ENCODE measurements at regions of chr7 and their contacts with region 1.

Region 1: DNA sequence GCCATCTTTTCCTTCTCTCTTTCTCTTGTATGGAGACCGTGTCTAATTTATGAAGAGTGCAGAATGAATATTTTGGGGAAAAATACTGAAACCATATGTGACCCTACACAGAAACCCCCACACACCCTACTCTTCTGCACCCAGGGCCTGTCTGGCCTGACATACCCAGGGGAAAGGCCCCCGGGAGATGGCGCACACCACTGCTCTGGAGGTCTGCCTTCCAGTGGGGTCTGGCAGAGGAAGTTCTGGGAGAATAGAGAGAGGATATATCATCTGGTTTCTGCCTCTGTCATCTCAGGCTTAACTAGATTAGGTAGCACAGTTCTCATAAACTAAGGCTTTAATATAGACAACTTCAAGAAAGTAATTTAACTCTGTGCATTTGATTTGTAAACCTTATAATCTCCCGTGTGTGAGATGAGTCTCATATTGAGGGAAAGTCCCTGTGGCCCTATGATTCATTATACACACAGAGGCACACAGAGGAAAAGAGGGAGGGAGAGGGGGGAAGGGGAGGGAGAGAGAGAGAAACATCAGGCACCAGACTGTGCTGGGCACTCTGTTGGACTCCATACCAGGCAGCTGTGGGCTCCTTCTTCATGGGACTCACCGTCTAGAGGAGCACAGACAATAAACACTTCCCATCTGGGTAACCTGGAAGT is 123.3 kb downstream of the AOAH start:
- DNase-seq: peak; percentile 60
- H3K4me3 Mint-ChIP-seq: no peak overlapping the region
- H3K27ac Mint-ChIP-seq: no peak overlapping the region
- H3K4me1 Mint-ChIP-seq: peaks cover 73% of the 10 kb centered on the region
- H3K27me3 Mint-ChIP-seq: no peaks in the 10 kb centered on the region

Region 2: GRCh38 chr7:36415144-36415543 is 185.9 kb before region 1 on chr7:
- CTCF ChIA-PET with region 1: no interaction called
- intact Hi-C with region 1: no loop called
- DNase-seq: no peak
- H3K4me3 Mint-ChIP-seq: no peak overlapping the region
- H3K27ac Mint-ChIP-seq: no peak overlapping the region
- H3K4me1 Mint-ChIP-seq: no peaks in the 10 kb centered on the region
- H3K27me3 Mint-ChIP-seq: no peaks in the 10 kb centered on the region

Region 3: DNA sequence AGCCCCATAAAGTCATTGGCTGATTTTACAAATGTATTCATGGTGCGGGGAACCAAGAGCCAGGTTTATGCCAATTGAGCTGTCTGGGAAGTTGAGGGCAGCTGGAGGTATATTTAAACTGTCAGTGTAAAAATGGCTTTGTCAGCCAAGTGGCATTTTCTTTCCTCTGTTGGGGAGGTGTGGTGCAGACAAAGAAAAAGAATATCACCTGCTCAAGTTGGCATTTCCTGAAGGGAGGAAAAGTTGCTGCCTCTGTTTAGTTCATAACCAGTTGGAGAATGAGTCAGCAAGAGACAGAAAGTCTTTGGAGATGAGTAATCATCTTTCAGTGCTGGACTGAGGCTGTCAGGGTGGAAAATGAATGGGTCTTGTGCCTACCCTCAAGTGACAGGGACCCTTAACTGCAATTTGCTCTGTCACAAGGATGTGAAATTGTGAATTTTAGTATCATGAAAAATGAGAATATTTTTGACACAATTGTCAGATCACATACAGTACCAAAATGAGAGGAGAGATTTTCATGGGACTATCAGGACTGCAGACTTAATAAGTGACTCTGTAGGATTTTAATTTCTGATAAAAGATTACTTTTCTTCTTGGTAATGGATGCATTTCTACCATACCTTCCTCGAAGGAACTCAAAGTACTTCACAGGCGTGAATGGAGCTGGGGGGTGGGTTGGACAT is 74.0 kb before region 1 on chr7:
- CTCF ChIA-PET with region 1: no interaction called
- intact Hi-C with region 1: loop called (anchors 5 kb)
- DNase-seq: no peak
- H3K4me3 Mint-ChIP-seq: no peak overlapping the region
- H3K27ac Mint-ChIP-seq: no peak overlapping the region
- H3K4me1 Mint-ChIP-seq: peaks cover 11% of the 10 kb centered on the region
- H3K27me3 Mint-ChIP-seq: no peaks in the 10 kb centered on the region

Region 4: GRCh38 chr7:36563706-36564327 is 37.2 kb before region 1 on chr7:
- CTCF ChIA-PET with region 1: no interaction called
- intact Hi-C with region 1: no loop called
- DNase-seq: no peak
- H3K4me3 Mint-ChIP-seq: no peak overlapping the region
- H3K27ac Mint-ChIP-seq: no peak overlapping the region
- H3K4me1 Mint-ChIP-seq: peaks cover 2% of the 10 kb centered on the region
- H3K27me3 Mint-ChIP-seq: no peaks in the 10 kb centered on the region

Region 5: GRCh38 chr7:36621396-36621795 is 20.4 kb after region 1 on chr7:
- CTCF ChIA-PET with region 1: interaction called, 3 read pairs
- intact Hi-C with region 1: loop called (anchors 1 kb)
- DNase-seq: no peak
- H3K4me3 Mint-ChIP-seq: no peak overlapping the region
- H3K27ac Mint-ChIP-seq: no peak overlapping the region
- H3K4me1 Mint-ChIP-seq: peaks cover 21% of the 10 kb centered on the region
- H3K27me3 Mint-ChIP-seq: no peaks in the 10 kb centered on the region

Region 6: GRCh38 chr7:36670585-36671431 is 69.8 kb after region 1 on chr7:
- CTCF ChIA-PET with region 1: interaction called, 11 read pairs
- intact Hi-C with region 1: loop called (anchors 1 kb)
- DNase-seq: peak; percentile 85
- H3K4me3 Mint-ChIP-seq: no peak overlapping the region
- H3K27ac Mint-ChIP-seq: no peak overlapping the region
- H3K4me1 Mint-ChIP-seq: peaks cover 29% of the 10 kb centered on the region
- H3K27me3 Mint-ChIP-seq: peaks cover 2% of the 10 kb centered on the region

Region 7: GRCh38 chr7:36777062-36777461 is 176.1 kb after region 1 on chr7:
- CTCF ChIA-PET with region 1: no interaction called
- intact Hi-C with region 1: loop called (anchors 5 kb)
- DNase-seq: peak; percentile 46
- H3K4me3 Mint-ChIP-seq: peak overlapping the region; percentile 48
- H3K27ac Mint-ChIP-seq: no peak overlapping the region
- H3K4me1 Mint-ChIP-seq: peaks cover 68% of the 10 kb centered on the region
- H3K27me3 Mint-ChIP-seq: no peaks in the 10 kb centered on the region

Region 8: GRCh38 chr7:37031571-37032257 is 430.7 kb after region 1 on chr7:
- CTCF ChIA-PET with region 1: no interaction called
- intact Hi-C with region 1: loop called (anchors 5 kb)
- DNase-seq: peak; percentile 79
- H3K4me3 Mint-ChIP-seq: no peak overlapping the region
- H3K27ac Mint-ChIP-seq: peak overlapping the region; percentile 50
- H3K4me1 Mint-ChIP-seq: peaks cover 60% of the 10 kb centered on the region
- H3K27me3 Mint-ChIP-seq: no peaks in the 10 kb centered on the region

Region 9: GRCh38 chr7:37765872-37766525 is 1165.0 kb after region 1 on chr7:
- CTCF ChIA-PET with region 1: no interaction called
- intact Hi-C with region 1: no loop called
- DNase-seq: peak; percentile 10
- H3K4me3 Mint-ChIP-seq: no peak overlapping the region
- H3K27ac Mint-ChIP-seq: peak overlapping the region; percentile 4
- H3K4me1 Mint-ChIP-seq: no peaks in the 10 kb centered on the region
- H3K27me3 Mint-ChIP-seq: peaks cover 4% of the 10 kb centered on the region

Measured in activated naive CD4-positive, alpha-beta T cell treated with anti-CD3 and anti-CD28 coated beads for 36 hours (primary cell).